ENCODE measurements at regions of chr12 and their contacts with region 1.

Region 1: DNA sequence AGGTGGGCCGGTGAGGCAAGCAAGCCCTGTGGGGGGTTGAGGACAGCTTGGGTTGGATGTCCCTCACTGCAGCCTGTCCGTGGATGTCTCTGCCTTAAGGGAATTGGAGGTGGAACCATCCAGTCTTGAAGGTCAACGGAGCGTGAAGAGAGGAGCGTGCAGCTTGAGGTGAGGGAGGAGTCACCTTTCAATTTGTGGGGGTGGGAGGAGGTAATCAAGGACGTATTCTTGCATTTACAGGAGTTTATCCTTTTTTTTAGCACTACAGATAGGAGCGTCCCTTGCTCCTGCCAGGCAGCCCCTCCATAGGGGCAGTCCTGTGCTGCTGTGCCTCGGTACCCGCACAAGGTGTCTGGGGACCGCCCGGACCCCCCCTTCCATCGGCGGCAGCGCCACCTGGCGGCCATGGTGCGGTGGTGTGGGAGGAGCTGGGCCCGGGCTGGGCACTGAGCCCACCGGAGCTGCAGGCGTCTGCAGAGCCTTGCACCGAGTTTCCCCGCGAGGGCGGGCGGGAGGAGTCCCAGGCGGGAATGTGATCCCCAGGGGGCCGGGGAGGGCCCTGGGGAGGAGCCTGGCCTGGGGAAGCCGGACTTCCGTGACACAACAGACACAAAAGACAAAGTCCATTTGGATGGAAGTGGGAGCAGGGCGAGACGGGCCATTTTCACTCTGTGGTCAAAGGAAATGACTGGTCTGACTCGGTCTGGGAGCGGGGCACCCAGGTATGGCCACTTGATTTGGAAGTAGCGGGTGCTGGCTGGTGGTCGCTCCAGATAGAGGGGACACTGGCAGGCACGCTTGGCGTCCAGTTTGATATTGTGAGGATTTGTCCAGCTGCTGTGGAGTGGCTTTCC is 923 bp downstream of the DNAJC22 start:
- DNase-seq: peak; percentile 77
- H3K4me3 Mint-ChIP-seq: peak overlapping the region; percentile 58
- H3K27ac Mint-ChIP-seq: no peak overlapping the region
- H3K4me1 Mint-ChIP-seq: peaks cover 41% of the 10 kb centered on the region
- H3K27me3 Mint-ChIP-seq: peaks cover 58% of the 10 kb centered on the region

Region 2: GRCh38 chr12:49336645-49337584 is 10.7 kb before region 1 on chr12 and contains the start of gene C1QL4:
- CTCF ChIA-PET with region 1: interaction called, 28 read pairs
- intact Hi-C with region 1: no loop called
- DNase-seq: peak; percentile 90
- H3K4me3 Mint-ChIP-seq: peak within 1 kb of the TSS; percentile 57
- H3K27ac Mint-ChIP-seq: no peak within 1 kb of the TSS
- H3K4me1 Mint-ChIP-seq: peaks cover 25% of the 10 kb centered on the region
- H3K27me3 Mint-ChIP-seq: peaks cover 78% of the 10 kb centered on the region
- total RNA-seq, gene C1QL4: not detected